CD8-positive, alpha-beta memory T cell (primary cell): ENCODE measurements at regions of chr19 and their contacts with region 1.

Region 1: DNA sequence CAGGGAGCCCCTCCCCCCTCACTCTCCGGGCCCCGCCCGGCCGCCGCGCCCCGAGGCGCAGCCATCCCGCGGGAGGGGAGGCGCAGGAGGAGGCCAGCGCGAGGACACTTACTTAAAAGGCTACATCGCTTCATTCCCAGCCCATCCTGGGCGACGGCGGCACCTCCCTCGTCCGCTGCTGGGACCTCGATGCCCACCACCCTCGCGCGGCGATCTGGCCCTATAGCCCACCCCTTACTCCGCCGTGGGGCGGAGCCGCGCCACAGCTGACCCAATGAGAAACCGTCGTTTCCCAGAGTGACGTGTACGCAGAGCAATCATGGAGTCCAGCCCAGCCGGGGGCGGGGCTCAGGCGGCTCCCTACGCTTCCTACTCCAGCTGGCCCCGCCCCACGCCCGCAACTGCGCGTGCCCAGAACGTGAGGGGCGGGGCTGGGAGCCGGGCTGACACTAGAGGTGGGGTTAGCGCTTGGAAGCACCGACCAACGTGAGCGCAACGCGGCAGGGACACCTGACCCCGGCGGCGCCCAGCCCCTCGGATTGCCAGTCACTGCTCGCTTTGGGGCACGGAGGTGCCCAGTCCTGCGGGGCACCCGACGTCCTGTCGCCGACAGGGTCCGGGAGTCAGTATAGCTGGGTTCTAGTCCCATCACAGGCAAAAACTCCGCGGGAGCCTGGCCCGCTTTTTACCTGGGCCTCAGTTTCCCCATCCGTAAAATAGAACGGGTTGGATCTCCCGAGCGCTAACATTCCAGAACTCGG is at the start of gene ANKRD27:
- DNase-seq: peak; percentile 97 to 98 (median 98)
- H3K4me3 ChIP-seq: peak within 1 kb of the TSS; percentile 92
- H3K4me3 Mint-ChIP-seq: peak within 1 kb of the TSS; percentile 92 to 97 (median 95)
- H3K27ac ChIP-seq: peak within 1 kb of the TSS; percentile 80
- H3K27ac Mint-ChIP-seq: peak within 1 kb of the TSS; percentile 74 to 91 (median 82)
- H3K4me1 ChIP-seq: peaks cover 19% of the 10 kb centered on the region
- H3K4me1 Mint-ChIP-seq: peaks cover 40 to 51% (median 41%) of the 10 kb centered on the region in 3 donors
- H3K27me3 ChIP-seq: peaks cover 8% of the 10 kb centered on the region
- H3K27me3 Mint-ChIP-seq: peaks cover 9 to 10% of the 10 kb centered on the region in 2 donors
- total RNA-seq, gene ANKRD27: 38.0 to 42.4 TPM

Region 2: DNA sequence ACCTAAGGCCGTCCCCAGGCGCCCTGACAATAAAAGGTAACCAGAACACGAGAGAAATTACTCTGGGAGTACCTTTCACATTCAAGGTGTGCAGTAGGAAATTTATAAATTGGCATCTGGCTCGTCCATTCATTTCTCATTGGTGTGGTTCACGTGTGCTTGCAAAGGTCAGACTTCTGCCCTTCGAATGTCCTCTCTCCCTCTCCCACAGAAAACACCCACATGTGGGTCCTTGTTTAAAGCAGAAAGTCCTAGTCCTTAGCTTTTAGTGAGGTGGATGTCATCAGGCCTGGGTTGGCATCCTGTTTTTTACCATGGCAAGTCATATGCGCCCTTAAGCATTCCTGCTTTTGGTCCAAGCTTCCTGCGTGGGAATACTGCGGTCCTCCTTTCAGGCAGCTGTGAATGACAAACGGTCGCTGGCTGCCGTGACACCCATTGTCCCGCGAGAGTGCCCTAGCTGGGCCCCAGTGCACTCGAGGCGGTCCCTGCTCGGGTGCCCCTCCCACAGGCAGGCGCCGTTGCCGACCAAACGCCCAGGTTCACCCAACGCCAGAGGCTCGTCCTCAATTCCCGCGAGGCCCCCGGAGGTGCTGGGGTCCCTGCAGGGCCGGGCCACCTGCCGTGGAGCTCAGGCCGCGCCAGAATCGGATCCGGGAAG is 16.3 kb after region 1 on chr19 and contains the start of gene NUDT19:
- CTCF ChIA-PET with region 1: interaction called, 3 read pairs
- POLR2A ChIA-PET with region 1: interaction called, 25 read pairs
- DNase-seq: peak; percentile 50 to 85 (median 67)
- H3K4me3 ChIP-seq: peak within 1 kb of the TSS; percentile 76
- H3K4me3 Mint-ChIP-seq: peak within 1 kb of the TSS; percentile 88 to 97 (median 95)
- H3K27ac ChIP-seq: peak within 1 kb of the TSS; percentile 77
- H3K27ac Mint-ChIP-seq: peak within 1 kb of the TSS; percentile 87 to 100 (median 97)
- H3K4me1 ChIP-seq: peaks cover 42% of the 10 kb centered on the region
- H3K4me1 Mint-ChIP-seq: peaks cover 47 to 57% (median 52%) of the 10 kb centered on the region in 3 donors
- H3K27me3 ChIP-seq: no peaks in the 10 kb centered on the region
- H3K27me3 Mint-ChIP-seq: no peaks in the 10 kb centered on the region
- total RNA-seq, gene NUDT19: 19.5 to 20.6 TPM

Region 3: GRCh38 chr19:32767951-32768679 is 93.0 kb after region 1 on chr19:
- CTCF ChIA-PET with region 1: no interaction called
- POLR2A ChIA-PET with region 1: no interaction called
- DNase-seq: no peak
- H3K4me3 ChIP-seq: no peak overlapping the region
- H3K4me3 Mint-ChIP-seq: no peak overlapping the region
- H3K27ac ChIP-seq: no peak overlapping the region
- H3K27ac Mint-ChIP-seq: peak overlapping the region in 1 of 8 donors; percentile 51
- H3K4me1 ChIP-seq: no peaks in the 10 kb centered on the region
- H3K4me1 Mint-ChIP-seq: no peaks in the 10 kb centered on the region
- H3K27me3 ChIP-seq: no peaks in the 10 kb centered on the region
- H3K27me3 Mint-ChIP-seq: peaks cover 2 to 3% of the 10 kb centered on the region in 2 donors